ENCODE measurements at regions of chr15 and their contacts with region 1.

Region 1: GRCh38 chr15:77034695-77035489 is 36.0 kb downstream of the TSPAN3 start:
- DNase-seq: peak; percentile 80
- ATAC-seq: peak; percentile 61
- H3K4me3 Mint-ChIP-seq: no peak overlapping the region
- H3K27ac Mint-ChIP-seq: no peak overlapping the region
- H3K4me1 Mint-ChIP-seq: no peaks in the 10 kb centered on the region
- H3K27me3 Mint-ChIP-seq: no peaks in the 10 kb centered on the region

Region 2: GRCh38 chr15:77052556-77052955 is 17.7 kb after region 1 on chr15:
- CTCF ChIA-PET with region 1: interaction called, 22 read pairs
- POLR2A ChIA-PET with region 1: interaction called, 3 read pairs
- intact Hi-C with region 1: no loop called
- DNase-seq: no peak
- ATAC-seq: no peak
- H3K4me3 Mint-ChIP-seq: no peak overlapping the region
- H3K27ac Mint-ChIP-seq: no peak overlapping the region
- H3K4me1 Mint-ChIP-seq: peaks cover 15% of the 10 kb centered on the region
- H3K27me3 Mint-ChIP-seq: no peaks in the 10 kb centered on the region

Region 3: GRCh38 chr15:77059786-77060361 is 25.0 kb after region 1 on chr15:
- CTCF ChIA-PET with region 1: interaction called, 7 read pairs
- POLR2A ChIA-PET with region 1: no interaction called
- intact Hi-C with region 1: loop called in 1 of 2 experiments (anchors 1 kb)
- DNase-seq: no peak
- ATAC-seq: peak; percentile 43
- H3K4me3 Mint-ChIP-seq: no peak overlapping the region
- H3K27ac Mint-ChIP-seq: no peak overlapping the region
- H3K4me1 Mint-ChIP-seq: peaks cover 52% of the 10 kb centered on the region
- H3K27me3 Mint-ChIP-seq: no peaks in the 10 kb centered on the region

Region 4: DNA sequence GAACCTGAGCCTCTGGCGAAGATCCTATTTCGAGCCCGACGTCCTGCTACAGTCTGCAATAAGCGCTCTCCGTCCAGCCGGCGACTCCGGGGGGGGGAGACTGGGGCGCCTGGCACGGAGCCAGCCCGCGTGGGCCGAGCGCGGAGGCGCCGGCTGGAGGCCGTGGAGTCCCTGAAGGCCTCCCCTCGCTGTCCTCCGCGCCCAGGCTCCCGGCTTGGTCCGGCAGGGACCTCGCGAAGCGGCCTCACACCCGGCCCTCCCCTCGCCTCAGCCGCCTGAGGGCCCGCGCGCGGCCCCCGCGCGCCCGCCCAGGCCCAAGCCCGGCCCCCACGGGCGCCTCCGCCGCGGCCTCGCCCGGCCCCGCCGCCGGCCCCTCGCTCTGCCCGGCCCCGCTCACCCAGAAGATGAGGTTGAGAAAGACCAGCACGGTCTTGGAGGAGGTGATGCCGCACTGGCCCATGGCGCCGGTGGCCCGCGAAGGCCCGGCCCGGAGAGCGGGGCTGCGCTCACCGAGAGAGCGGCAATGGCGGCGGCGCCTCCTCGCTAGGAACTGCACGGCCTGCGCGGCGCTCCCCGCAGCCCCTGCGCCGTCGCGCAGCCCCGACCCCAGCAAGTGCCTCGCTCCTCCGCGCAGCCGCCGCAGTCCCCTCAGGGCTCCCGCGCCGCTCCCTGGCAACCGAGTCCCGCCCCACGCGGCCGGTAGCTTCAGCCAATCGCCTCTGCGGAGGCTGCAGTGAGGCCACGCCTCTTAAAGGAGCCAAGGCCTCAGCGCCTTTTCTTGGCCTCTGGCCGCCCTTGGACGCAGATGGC is 35.8 kb after region 1 on chr15 and contains the start of gene TSPAN3:
- CTCF ChIA-PET with region 1: interaction called, 3 read pairs
- POLR2A ChIA-PET with region 1: no interaction called
- intact Hi-C with region 1: loop called in 1 of 2 experiments (anchors 1 kb)
- DNase-seq: peak; percentile 95
- ATAC-seq: peak; percentile 99
- H3K4me3 Mint-ChIP-seq: peak within 1 kb of the TSS; percentile 75
- H3K27ac Mint-ChIP-seq: peak within 1 kb of the TSS; percentile 65
- H3K4me1 Mint-ChIP-seq: peaks cover 29% of the 10 kb centered on the region
- H3K27me3 Mint-ChIP-seq: no peaks in the 10 kb centered on the region
- total RNA-seq, gene TSPAN3: 26.2 to 28.4 TPM

Measured in activated CD4-positive, alpha-beta T cell treated with anti-CD3 and anti-CD28 coated beads for 36 hours (primary cell).